Natural killer cell (primary cell): ENCODE measurements at regions of chr11 and their contacts with region 1.

Region 1: DNA sequence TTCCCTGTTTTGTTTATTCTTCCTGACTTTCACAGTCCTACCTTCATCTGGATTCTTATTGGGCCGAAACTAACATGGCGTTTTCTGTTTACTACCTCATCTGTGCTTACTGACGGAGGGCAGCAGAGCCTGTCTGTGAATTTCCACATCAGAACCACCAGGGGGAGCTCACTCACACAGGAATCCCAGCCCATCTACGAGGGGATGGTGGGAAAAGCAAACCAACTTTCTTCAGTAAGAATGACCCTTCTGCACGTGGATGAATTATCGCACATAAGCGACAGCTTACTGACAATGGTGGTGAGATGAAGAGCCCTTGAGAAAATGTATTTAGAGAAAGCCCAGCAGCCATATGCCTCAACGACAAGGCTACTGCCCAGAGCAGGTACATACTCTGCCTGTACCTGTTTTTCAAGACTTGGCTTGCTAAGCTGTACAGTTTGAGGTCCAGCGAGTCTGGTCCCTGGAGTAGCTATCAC is 42.5 kb downstream of the LARGE2 start:
- DNase-seq: peak; percentile 36 to 90
- ATAC-seq: peak; percentile 88 to 99 (median 96)
- H3K4me3 ChIP-seq: no peak overlapping the region
- H3K4me3 Mint-ChIP-seq: no peak overlapping the region
- H3K27ac ChIP-seq: no peak overlapping the region
- H3K27ac Mint-ChIP-seq: no peak overlapping the region
- H3K4me1 ChIP-seq: no peaks in the 10 kb centered on the region
- H3K4me1 Mint-ChIP-seq: no peaks in the 10 kb centered on the region
- H3K27me3 ChIP-seq: no peaks in the 10 kb centered on the region
- H3K27me3 Mint-ChIP-seq: no peaks in the 10 kb centered on the region
- CTCF ChIP-seq: peak; percentile 91

Region 2: GRCh38 chr11:46006418-46007070 is 41.6 kb after region 1 on chr11:
- intact Hi-C with region 1: loop called (anchors 1 kb)
- DNase-seq: peak in 1 of 2 donors; percentile 78
- ATAC-seq: peak; percentile 79 to 87 (median 83)
- H3K4me3 ChIP-seq: no peak overlapping the region
- H3K4me3 Mint-ChIP-seq: no peak overlapping the region
- H3K27ac ChIP-seq: no peak overlapping the region
- H3K27ac Mint-ChIP-seq: peak overlapping the region; percentile 6 to 67
- H3K4me1 ChIP-seq: no peaks in the 10 kb centered on the region
- H3K4me1 Mint-ChIP-seq: peaks cover 18 to 21% of the 10 kb centered on the region in 2 donors
- H3K27me3 ChIP-seq: no peaks in the 10 kb centered on the region
- H3K27me3 Mint-ChIP-seq: no peaks in the 10 kb centered on the region
- CTCF ChIP-seq: peak; percentile 71

Region 3: DNA sequence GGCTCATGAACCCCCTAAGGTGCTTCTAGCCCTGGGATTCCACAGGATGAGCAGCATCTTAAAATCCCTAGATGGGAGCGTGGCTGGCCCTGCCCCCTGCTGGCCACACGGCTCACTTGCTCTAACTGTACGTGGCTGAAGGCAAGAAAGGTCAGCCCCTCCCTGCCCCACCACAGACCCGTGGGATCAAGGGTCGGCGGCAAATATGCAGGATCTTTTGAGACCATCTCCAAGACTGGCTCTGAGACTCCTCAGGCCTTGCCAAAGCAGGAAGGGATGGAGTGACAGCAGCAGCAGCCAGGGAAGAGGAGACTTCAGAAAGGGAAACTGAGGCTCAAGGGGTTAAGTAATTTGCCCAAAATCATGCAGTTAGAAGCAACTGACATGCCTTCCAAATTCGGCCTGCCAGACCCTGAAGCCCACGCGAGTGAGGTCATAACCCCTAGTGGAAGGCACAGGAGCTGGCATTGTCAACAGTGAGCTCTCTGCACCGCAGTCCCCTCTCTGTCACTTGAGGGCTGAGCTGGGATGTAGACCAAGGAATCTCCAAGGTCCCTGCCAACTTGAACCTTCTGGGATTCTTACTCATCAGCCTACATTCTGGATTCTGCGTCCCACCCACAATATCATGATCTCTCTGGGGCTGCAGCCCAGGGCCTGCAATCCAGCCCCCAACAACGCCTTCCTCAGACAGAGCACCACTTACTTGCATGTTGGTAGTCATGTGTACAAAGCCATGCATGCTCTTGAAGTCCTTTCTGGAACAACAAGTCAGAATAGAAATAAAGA is 343.9 kb after region 1 on chr11:
- intact Hi-C with region 1: loop called (anchors 1 kb)
- DNase-seq: peak; percentile 55 to 78
- ATAC-seq: peak; percentile 69 to 93 (median 86)
- H3K4me3 ChIP-seq: no peak overlapping the region
- H3K4me3 Mint-ChIP-seq: peak overlapping the region; percentile 21
- H3K27ac ChIP-seq: no peak overlapping the region
- H3K27ac Mint-ChIP-seq: no peak overlapping the region
- H3K4me1 ChIP-seq: peaks cover 23% of the 10 kb centered on the region
- H3K4me1 Mint-ChIP-seq: peaks cover 0 to 9% of the 10 kb centered on the region in 2 donors
- H3K27me3 ChIP-seq: no peaks in the 10 kb centered on the region
- H3K27me3 Mint-ChIP-seq: peaks cover 0 to 3% of the 10 kb centered on the region in 2 donors
- CTCF ChIP-seq: peak; percentile 87